Activated CD8-positive, alpha-beta memory T cell treated with anti-CD3 and anti-CD28 coated beads, Interleukin-2, amount 10 ng/mL, durations not matched to agents 7 days and 5 days (primary cell): ENCODE measurements at regions of chr17 and their contacts with region 1.

Region 1: DNA sequence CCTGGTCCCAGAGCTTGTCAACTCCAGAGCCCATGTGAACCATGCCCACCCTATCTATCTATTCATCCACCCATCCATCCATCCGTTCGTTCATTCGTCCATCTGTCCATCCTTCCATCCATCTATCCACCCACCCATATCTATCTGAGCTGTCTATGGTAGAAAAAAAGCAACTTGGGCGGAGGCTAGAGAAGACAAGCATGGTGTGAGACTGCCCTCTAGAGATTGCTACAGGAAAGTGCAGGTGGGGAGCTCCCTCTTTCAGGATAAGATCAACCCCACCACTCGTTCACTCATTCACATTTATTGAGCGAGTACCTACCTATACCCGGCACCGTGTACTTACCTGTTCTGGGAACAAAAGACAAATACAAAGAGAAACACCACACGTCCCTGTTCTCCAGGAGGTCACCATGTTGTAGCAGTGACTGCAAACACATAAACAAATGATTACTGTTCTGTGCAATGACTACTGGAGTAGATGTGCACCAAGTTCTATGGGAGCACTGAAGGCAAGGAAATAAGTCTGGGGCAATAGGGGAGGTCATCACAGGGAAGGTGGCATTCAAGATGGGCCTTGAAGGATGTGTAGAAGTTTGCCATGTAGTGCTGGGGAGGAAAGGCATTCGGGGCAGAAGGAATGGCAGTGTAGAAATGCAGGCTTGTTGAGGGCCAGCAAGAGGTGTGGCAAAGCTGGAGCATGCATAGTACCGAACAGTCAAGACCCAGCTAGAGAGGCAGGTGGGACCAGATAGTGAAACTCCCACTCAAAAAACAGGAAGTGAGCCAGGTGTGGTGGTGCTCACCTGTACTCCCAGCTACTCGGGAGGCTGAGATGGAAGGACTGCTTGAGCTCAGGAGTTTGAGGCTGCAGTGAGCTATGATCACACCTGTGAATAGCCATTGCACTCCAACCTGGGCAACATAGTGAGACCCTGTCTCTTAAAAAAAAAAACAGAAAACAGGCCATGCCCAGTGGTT is 13.4 kb upstream of the ATP5MC1 start:
- DNase-seq: peak; percentile 71
- ATAC-seq: peak; percentile 81
- H3K4me3 Mint-ChIP-seq: no peak overlapping the region
- H3K27ac Mint-ChIP-seq: no peak overlapping the region
- H3K4me1 Mint-ChIP-seq: peaks cover 27% of the 10 kb centered on the region
- H3K27me3 Mint-ChIP-seq: peaks cover 3% of the 10 kb centered on the region

Region 2: DNA sequence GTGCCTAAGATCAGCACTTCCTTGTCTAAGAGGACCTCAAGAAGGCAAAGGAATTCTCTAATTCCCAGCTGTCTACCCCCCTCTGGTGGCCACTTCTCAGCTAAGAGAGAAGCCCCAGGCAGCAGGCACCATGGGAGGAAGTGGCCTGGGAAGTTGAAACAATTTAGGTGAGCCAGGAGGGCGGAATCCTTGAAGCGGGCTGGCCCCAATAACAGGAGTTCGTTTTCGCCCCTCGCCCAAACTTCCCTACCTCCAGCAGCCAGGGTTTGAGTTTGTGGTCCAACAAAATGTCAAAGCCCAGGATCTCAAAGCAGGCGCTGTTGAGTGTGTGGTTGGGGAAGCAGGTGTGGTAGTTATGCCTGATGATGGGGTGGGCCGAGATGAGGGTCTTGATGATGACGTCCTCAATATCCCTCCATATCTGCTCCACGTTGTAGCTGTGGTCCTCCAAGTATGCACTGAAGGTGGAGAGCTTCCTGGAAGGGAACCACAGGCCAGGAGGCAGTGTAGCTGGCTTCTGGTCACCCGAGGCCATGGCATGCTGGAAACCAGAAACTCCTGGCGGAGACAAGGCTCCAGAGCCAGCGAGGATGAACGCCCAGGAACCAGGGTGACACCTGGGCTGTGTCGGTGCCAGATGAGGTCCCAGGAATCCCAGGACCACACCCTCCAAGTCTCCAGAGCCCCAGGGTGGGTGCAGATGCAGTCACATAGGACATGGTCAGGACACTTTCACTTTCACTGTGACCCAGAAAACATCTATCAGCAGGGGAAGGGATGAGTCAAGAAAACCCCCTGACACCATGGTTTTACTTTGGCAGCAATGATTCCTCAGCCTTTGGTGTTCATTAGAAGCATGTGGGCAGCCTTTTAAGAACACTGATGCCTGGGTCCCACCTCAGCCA is 87.8 kb before region 1 on chr17:
- CTCF ChIA-PET with region 1: interaction called, 714 read pairs
- DNase-seq: peak; percentile 52
- ATAC-seq: peak; percentile 72
- H3K4me3 Mint-ChIP-seq: no peak overlapping the region
- H3K27ac Mint-ChIP-seq: no peak overlapping the region
- H3K4me1 Mint-ChIP-seq: peaks cover 14% of the 10 kb centered on the region
- H3K27me3 Mint-ChIP-seq: peaks cover 50% of the 10 kb centered on the region

Region 3: GRCh38 chr17:48830840-48831548 is 48.2 kb before region 1 on chr17 and contains the start of gene CALCOCO2:
- CTCF ChIA-PET with region 1: interaction called, 21 read pairs
- DNase-seq: peak; percentile 95
- ATAC-seq: peak; percentile 90
- H3K4me3 Mint-ChIP-seq: peak within 1 kb of the TSS; percentile 97
- H3K27ac Mint-ChIP-seq: peak within 1 kb of the TSS; percentile 100
- H3K4me1 Mint-ChIP-seq: peaks cover 57% of the 10 kb centered on the region
- H3K27me3 Mint-ChIP-seq: peaks cover 8% of the 10 kb centered on the region
- total RNA-seq, gene CALCOCO2: 165 to 170 TPM

Region 4: GRCh38 chr17:48841395-48841831 is 37.8 kb before region 1 on chr17:
- CTCF ChIA-PET with region 1: interaction called, 21 read pairs
- DNase-seq: peak; percentile 84
- ATAC-seq: peak; percentile 92
- H3K4me3 Mint-ChIP-seq: peak overlapping the region; percentile 63
- H3K27ac Mint-ChIP-seq: peak overlapping the region; percentile 89
- H3K4me1 Mint-ChIP-seq: peaks cover 63% of the 10 kb centered on the region
- H3K27me3 Mint-ChIP-seq: no peaks in the 10 kb centered on the region

Region 5: DNA sequence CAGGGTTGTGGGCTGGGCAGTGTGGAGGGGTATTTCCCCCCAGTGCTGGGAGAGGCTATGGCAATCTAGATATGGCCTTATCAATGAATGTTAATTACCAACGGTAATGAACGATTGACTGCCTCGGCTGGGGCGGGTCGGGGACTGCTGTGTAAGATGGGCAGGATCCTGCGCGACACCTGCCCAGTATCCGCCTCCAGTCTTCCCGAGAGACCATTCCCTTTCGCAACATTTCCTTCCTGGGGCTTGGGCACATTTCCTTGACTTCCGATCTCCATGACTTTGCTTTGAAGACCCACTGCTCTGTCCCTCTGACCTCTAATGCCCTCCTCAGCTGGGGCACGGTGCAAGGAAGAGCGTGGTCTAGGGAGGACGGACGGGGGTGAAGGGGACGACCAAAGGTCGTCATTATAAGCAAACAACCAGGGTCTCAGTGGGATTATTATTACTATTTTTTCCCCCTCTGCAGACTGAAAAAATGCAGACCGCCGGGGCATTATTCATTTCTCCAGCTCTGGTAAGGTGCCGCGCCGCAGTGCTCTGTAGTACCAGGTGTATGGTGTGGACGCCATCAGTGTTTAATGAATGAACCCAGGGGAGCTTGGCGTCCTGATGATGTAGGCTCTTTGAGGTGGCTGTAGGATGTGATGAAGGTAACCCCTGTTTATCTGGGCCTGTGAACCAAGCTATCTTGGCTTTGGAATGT is 13.9 kb after region 1 on chr17:
- CTCF ChIA-PET with region 1: interaction called, 29 read pairs
- DNase-seq: no peak
- ATAC-seq: no peak
- H3K4me3 Mint-ChIP-seq: peak overlapping the region; percentile 88
- H3K27ac Mint-ChIP-seq: peak overlapping the region; percentile 94
- H3K4me1 Mint-ChIP-seq: peaks cover 43% of the 10 kb centered on the region
- H3K27me3 Mint-ChIP-seq: no peaks in the 10 kb centered on the region

Region 6: GRCh38 chr17:49031965-49032928 is 153.0 kb after region 1 on chr17:
- CTCF ChIA-PET with region 1: interaction called, 17 read pairs
- DNase-seq: peak; percentile 65
- ATAC-seq: peak; percentile 79
- H3K4me3 Mint-ChIP-seq: no peak overlapping the region
- H3K27ac Mint-ChIP-seq: no peak overlapping the region
- H3K4me1 Mint-ChIP-seq: peaks cover 6% of the 10 kb centered on the region
- H3K27me3 Mint-ChIP-seq: no peaks in the 10 kb centered on the region